ENCODE measurements at regions of chr15 and their contacts with region 1.

Region 1: GRCh38 chr15:40069178-40070165 is 30.5 kb upstream of the SRP14 start:
- DNase-seq: peak; percentile 89 to 99 (median 94)

Region 2: GRCh38 chr15:40081691-40082194 is 12.3 kb after region 1 on chr15:
- intact Hi-C with region 1: loop called (anchors 1 kb)
- DNase-seq: peak; percentile 51 to 95 (median 74)